ENCODE measurements at regions of chr16 and their contacts with region 1.

Region 1: GRCh38 chr16:53785044-53785443 is 81.1 kb downstream of the FTO start:
- DNase-seq: no peak
- H3K4me3 ChIP-seq: no peak overlapping the region
- H3K27ac ChIP-seq: no peak overlapping the region
- H3K4me1 ChIP-seq: peaks cover 6 to 17% (median 11%) of the 10 kb centered on the region in 4 donors
- H3K27me3 ChIP-seq: no peaks in the 10 kb centered on the region
- CTCF ChIP-seq: no peak
- EP300 ChIP-seq: no peak
- POLR2A ChIP-seq: no peak

Region 2: DNA sequence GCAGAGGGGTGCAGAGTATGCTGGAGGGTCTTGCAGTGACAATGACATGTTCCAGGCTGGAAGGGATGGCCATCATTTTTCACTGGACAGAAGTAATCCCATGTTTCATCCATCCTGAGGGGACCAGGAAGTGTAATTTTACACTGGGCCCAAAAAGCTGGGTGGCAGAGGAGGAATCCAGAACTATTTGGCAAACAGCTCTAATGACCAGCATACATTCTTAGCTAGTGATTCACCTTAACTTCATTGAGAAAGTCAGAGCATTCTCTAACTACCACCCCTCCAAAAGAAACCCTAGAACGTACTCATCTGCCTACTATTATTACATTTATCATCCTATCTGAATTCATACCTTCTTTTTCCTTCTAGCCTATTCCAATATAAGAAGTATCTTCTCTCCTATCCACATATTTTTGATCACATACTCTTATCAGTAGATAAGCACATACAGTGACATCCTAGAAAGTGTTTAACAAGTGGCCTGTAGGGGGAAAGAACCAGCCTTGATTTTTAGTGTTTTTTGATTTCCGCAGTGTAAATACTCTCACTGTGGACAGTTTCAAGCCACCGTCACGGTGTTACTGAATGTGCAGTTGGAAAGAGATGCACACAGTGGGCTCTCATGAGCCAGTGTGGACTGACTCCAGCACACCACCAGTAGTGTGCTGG is 37.0 kb after region 1 on chr16:
- in situ Hi-C with region 1: no loop called
- intact Hi-C with region 1: loop called (anchors 2 kb)
- DNase-seq: no peak
- H3K4me3 ChIP-seq: no peak overlapping the region
- H3K27ac ChIP-seq: no peak overlapping the region
- H3K4me1 ChIP-seq: no peaks in the 10 kb centered on the region
- H3K27me3 ChIP-seq: no peaks in the 10 kb centered on the region
- CTCF ChIP-seq: no peak
- EP300 ChIP-seq: no peak
- POLR2A ChIP-seq: no peak